WTC11 (cell line): ENCODE measurements at regions of chr2 and their contacts with region 1.

Region 1: DNA sequence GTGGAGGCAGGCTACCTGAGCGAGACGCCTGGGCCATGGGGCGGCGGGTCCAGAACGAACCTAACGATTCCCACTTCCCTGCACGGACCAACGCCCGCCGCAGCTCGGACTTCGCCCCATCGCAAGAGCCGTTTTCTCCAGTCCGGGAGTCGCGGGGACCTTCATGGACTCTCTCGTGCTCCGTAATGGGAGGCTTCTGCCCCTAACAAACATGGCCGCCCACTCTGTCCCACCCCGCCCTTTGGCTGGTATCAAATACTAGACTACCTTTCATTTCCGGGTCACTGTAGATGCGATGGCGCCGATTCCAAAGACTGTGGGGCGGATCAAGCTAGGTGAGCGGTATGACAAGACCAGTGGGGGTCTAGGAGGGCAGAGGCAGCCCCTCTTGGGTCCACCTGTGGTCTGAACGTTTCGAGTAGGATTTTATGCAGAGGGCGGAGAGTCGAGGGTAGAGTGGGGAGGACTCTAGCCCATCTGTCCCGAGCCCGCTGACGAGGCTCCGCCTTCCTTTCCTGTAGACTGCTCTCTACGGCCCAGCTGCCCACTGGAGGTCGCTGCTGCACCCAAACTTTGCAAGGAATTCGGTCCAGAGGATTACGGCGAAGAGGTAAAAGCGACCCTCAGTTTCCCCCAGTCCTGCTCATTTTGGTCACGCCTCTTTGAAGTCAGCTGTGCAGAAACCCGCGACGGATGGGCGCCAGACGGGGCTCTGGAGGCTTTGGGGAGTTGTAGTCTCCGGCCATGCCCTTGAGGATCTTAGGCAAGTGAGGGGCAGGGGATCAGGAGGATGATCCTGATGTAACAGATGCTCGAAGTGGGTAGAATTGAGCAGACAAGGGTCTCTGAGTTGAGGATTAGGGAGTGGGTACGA is at the starts of genes CCDC142 and TTC31:
- DNase-seq: peak; percentile 96
- ATAC-seq: peak; percentile 91
- H3K4me3 Mint-ChIP-seq: peak within 1 kb of the TSS; percentile 100
- H3K27ac Mint-ChIP-seq: peak within 1 kb of the TSS; percentile 100
- H3K4me1 Mint-ChIP-seq: peaks cover 10% of the 10 kb centered on the region
- H3K27me3 Mint-ChIP-seq: no peaks in the 10 kb centered on the region
- CTCF ChIP-seq: peak; percentile 68
- total RNA-seq, gene CCDC142: 10.0 to 14.0 TPM (median 10.4 TPM) in 3 replicates
- total RNA-seq, gene TTC31: 32.6 to 38.3 TPM (median 36.2 TPM) in 3 replicates

Region 2: DNA sequence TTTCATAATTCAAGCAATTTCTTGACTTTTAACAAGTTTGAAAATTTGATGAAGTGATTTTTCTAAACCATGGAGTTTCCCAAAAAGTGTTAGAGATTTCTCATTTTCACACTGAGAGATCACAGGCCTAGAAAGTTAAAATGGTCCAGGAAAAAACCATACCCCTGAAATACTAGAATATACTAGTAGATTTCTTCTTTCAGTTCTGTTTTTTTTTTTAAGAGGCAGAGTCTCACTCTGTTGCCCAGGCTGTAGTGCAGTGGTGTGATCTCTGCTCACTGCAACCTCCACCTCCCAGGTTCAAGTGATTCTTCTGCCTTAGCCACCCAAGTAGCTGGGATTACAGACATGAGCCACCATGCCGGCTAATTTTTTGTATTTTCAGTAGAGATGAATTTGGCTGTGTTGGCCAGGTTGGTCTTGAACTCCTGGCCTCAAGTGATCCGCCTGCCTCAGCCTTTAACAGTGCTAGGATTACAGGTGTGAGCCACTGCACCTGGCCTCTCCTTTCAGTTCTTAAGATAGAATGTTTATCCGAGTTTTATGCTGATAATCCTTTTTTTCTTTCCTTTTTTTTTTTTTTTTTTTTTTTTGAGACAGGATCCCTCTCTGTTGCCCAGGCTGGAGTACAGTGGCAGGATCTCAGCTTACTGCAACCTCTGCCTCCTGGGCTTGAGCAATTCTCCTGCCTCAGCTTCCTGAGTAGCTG is 270.2 kb before region 1 on chr2:
- CTCF ChIA-PET with region 1: no interaction called
- POLR2A ChIA-PET with region 1: no interaction called
- DNase-seq: no peak
- ATAC-seq: no peak
- H3K4me3 Mint-ChIP-seq: no peak overlapping the region
- H3K27ac Mint-ChIP-seq: no peak overlapping the region
- H3K4me1 Mint-ChIP-seq: no peaks in the 10 kb centered on the region
- H3K27me3 Mint-ChIP-seq: no peaks in the 10 kb centered on the region
- CTCF ChIP-seq: no peak

Region 3: DNA sequence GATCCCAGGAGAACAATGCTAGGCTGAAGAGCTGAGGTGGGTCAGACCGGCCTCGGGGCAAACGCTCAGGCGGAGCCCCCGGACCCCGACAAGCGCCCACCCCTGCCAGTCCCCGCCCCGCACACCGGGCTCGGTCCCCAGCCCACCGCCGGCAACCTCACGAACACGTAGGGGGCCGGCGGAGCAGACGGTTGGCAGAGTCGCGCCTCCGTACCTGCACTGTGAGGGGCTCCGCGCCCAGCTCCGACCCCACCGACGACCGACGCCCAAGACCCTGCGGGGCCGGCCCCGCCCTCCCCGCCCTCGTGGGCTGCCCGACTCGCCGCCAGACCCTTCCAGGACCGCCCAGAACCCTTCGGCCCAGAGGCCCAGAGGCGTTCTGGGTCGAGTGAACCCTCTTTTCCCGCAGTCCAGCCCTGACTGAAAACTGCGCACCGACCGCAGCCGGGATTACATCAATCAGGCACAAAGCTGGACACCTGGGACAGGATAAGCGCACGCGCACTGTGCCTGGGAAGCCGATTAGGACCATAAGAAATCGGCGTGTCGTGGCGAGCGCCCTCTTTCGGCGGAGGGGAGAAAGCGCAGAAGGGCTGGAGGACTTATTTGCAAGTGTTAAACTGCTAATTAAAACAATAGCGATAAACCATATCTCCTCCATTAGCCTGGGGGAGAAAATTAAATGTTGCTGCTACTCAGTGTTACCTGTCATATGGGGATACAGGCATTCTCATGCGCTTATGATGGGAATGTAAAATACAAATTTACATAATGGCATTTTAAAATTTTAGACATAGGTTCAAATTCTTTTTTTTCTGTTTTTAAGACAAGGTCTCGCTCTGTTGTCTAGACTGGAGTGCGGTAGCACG is 91.2 kb before region 1 on chr2:
- CTCF ChIA-PET with region 1: interaction called, 10 read pairs
- POLR2A ChIA-PET with region 1: no interaction called
- DNase-seq: peak; percentile 96
- ATAC-seq: peak; percentile 87
- H3K4me3 Mint-ChIP-seq: no peak overlapping the region; the same call in 1 of the 2 replicates
- H3K27ac Mint-ChIP-seq: peak overlapping the region; percentile 99
- H3K4me1 Mint-ChIP-seq: peaks cover 4% of the 10 kb centered on the region; the same call in 1 of the 2 replicates
- H3K27me3 Mint-ChIP-seq: no peaks in the 10 kb centered on the region; the same call in none of the 2 replicates
- CTCF ChIP-seq: peak; percentile 92

Region 4: DNA sequence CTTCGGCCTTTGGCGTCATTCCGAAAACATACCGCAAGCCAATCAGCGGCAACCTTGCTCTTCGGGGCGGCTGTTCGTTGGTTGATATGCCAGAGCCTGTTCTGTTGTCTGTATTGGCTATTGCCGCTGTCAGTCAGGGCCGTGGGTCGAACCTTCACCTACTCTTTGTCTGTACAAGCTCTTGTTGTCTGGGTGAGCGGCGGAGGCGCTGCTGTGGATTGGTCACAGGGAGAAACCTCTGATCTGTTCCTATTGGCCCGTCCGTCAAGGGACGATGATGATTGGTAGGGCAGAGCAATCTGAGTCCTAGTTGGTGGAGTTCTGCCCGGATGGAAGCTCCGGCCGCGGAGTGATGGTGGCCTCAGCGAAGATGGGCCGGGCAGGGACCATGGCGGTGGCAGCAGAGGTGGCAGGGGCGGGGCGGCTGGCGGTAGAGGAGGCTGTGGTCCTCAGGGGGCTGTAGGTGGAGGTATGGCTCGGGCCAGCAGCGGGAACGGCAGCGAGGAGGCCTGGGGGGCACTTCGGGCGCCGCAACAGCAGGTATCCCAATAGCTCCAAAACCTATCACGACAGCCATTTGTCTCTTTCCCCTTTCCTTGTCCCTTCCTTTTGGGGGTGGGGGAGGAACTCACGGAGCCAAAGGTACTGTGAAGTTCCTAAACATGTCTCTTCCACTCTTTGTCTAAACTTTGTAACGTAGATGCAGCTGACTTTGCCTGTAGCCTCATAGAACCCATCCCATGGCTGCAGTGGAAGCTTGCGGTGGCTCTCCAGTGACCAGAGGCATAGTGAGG is 24.7 kb before region 1 on chr2 and contains the start of gene WBP1:
- CTCF ChIA-PET with region 1: interaction called, 32 read pairs
- POLR2A ChIA-PET with region 1: interaction called, 4 read pairs
- DNase-seq: peak; percentile 100
- ATAC-seq: peak; percentile 89
- H3K4me3 Mint-ChIP-seq: peak within 1 kb of the TSS; percentile 96
- H3K27ac Mint-ChIP-seq: peak within 1 kb of the TSS; percentile 98
- H3K4me1 Mint-ChIP-seq: peaks cover 36% of the 10 kb centered on the region
- H3K27me3 Mint-ChIP-seq: no peaks in the 10 kb centered on the region
- CTCF ChIP-seq: no peak
- total RNA-seq, gene WBP1: 66.0 to 86.6 TPM (median 86.0 TPM) in 3 replicates

Region 5: DNA sequence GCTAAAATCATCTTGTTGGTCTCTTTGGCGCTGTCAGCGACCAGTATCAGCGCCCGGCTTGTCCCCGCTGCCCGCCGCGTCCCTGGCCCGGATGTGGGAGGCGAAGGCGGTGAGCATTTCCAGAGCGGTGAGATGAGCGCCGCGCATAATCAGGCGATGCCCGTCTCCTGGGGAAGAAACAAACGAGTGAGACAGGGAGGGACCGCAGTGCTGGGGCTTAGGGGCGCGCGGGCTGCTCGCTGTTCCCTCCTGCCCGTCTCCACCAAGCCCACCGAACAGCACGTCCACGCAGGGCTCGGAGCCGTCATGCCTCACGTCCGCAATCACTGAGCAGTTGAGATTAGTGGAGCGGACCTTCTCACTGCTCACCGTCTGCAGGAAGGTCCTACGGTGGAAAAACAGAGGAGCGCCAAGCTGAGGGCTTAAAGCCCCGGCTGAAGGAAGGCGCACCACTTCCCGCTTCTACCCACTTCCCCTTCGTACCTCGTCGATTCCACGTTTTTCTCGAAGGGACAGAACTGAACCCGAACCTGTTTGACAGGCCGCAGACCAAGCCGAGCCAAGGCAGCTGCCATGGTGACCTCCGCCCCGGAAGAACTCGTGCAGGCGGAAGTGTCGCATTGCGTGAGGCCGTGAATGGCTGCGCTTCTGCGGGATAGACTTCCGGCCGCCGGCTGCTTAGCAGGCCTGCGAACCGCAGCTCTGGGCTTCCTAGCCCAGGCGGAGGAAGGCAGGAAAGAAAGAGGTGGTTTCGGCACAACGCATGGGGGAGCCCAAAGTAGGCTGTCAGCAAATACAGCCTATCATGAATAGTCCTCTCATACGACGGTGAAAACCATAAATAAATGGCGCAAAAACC is 10.7 kb before region 1 on chr2 and contains the start of gene MRPL53:
- CTCF ChIA-PET with region 1: interaction called, 23 read pairs
- POLR2A ChIA-PET with region 1: interaction called, 4 read pairs
- DNase-seq: peak; percentile 94
- ATAC-seq: peak; percentile 88
- H3K4me3 Mint-ChIP-seq: peak within 1 kb of the TSS; percentile 96
- H3K27ac Mint-ChIP-seq: peak within 1 kb of the TSS; percentile 99
- H3K4me1 Mint-ChIP-seq: peaks cover 11% of the 10 kb centered on the region
- H3K27me3 Mint-ChIP-seq: no peaks in the 10 kb centered on the region
- CTCF ChIP-seq: no peak
- total RNA-seq, gene MRPL53: 52.1 to 62.6 TPM (median 55.0 TPM) in 3 replicates

Region 6: DNA sequence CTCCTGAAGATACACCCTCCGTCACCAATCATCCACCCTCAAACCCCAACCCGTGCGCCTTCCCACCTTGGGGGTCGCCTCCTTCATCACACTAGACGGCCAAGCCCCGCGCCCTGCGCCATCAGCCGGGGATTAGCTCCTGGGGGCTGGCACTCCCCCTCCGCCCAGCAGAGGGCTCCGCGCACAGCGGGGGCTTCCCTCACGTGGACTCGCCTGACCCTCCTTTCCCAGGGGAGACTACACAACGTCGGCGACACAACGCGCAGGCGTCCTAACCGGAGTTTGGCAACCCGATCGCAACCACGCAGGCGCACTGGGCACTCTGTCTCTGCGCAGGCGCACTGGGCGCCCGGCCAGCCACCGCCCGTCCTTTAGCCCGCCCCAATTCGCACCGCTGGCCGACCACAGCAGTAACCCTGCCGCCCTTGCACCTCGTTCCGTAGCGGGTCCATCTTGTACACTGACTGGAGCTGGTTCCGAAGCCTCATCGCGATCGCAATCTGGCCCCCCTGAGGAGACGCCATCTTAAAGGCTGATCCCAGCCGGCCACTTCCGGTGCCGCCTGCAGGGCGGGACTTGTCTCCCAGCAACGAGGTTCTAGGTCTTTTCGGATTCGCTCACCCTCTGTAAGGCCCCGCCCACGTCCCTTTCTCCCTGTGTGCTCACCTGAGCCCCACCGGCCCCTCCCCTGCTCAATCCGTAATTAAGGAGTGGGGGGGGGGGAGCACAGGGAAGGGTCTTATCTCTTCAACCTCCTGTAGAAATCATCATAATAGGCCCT is 24.3 kb after region 1 on chr2 and contains the start of gene PCGF1:
- CTCF ChIA-PET with region 1: interaction called, 43 read pairs
- POLR2A ChIA-PET with region 1: interaction called, 13 read pairs
- DNase-seq: peak; percentile 99
- ATAC-seq: peak; percentile 86
- H3K4me3 Mint-ChIP-seq: peak within 1 kb of the TSS; percentile 99
- H3K27ac Mint-ChIP-seq: peak within 1 kb of the TSS; percentile 100
- H3K4me1 Mint-ChIP-seq: peaks cover 29% of the 10 kb centered on the region
- H3K27me3 Mint-ChIP-seq: peaks cover 92% of the 10 kb centered on the region
- CTCF ChIP-seq: no peak
- total RNA-seq, gene PCGF1: 13.7 to 15.7 TPM (median 15.4 TPM) in 3 replicates

Region 7: DNA sequence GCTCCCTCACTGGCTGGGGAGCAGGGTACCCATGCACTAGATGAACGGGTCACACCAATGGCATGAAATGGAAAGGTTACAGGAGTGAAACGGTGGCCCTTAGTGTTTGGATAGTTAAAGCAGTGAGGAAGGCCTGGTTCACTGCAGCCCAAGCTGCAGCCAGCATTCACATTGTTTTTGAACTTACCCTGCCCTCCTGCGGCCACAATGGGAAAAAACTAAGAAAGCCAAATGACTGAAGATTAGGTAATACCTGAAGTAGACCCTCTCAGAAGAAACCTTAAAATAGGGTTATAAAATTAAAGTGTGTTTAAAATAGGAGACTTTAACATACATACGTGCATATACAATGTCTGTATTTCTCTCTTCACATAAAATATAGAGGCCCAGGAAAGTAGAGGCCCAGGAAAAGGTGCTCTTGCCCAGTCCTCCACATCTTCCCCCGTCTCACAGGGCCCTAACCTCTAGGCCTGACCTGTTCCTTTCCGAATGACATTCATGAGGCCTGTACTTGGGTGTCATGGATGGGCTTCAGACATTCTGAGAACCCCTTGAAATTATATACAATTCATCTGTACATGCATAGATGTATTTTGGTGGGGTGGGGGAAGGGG is 104.7 kb after region 1 on chr2:
- CTCF ChIA-PET with region 1: interaction called, 41 read pairs
- POLR2A ChIA-PET with region 1: no interaction called
- DNase-seq: peak; percentile 61
- ATAC-seq: peak; percentile 96
- H3K4me3 Mint-ChIP-seq: no peak overlapping the region
- H3K27ac Mint-ChIP-seq: peak overlapping the region; percentile 37
- H3K4me1 Mint-ChIP-seq: peaks cover 11% of the 10 kb centered on the region
- H3K27me3 Mint-ChIP-seq: peaks cover 3% of the 10 kb centered on the region
- CTCF ChIP-seq: no peak; the same call in 1 of the 2 replicates